Common myeloid progenitor, CD34-positive (primary cell): ENCODE measurements at regions of chr5 and their contacts with region 1.

Region 1: GRCh38 chr5:59367791-59368394 is 525.6 kb downstream of the PDE4D start:
- DNase-seq: peak; percentile 47 to 77 (median 70)
- H3K4me3 ChIP-seq: peak overlapping the region in 1 of 7 experiments; percentile 36
- H3K27ac ChIP-seq: no peak overlapping the region
- H3K4me1 ChIP-seq: no peaks in the 10 kb centered on the region
- H3K27me3 ChIP-seq: no peaks in the 10 kb centered on the region

Region 2: GRCh38 chr5:59188419-59189225 is 179.3 kb before region 1 on chr5:
- CTCF ChIA-PET with region 1: interaction called, 21 read pairs
- POLR2A ChIA-PET with region 1: no interaction called
- DNase-seq: peak; percentile 69 to 86 (median 84)
- H3K4me3 ChIP-seq: peak overlapping the region in 5 of 7 experiments; percentile 30 to 70 (median 52)
- H3K27ac ChIP-seq: no peak overlapping the region
- H3K4me1 ChIP-seq: peaks cover 0 to 5% (median 2%) of the 10 kb centered on the region in 4 experiments
- H3K27me3 ChIP-seq: no peaks in the 10 kb centered on the region

Region 3: DNA sequence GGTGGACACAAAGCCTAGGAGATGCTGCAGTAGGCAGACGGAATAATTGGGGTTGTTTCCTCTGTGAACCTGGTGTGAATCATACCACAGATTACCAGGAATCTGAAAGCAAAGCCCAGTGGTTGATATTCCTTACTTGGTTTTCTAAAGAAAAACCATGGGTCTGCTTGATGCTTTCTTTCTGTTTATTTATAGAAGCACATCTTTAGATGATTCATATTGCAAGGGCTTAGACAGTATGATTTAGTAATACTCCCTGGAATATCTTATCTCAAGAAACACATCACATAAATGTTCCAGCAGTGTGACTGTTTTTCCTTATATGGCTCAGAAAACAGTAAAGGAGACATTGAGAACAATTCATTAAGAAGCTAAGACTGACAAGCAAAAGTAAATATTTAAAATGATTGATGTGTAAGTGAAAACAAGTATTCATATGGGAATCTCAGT is 161.7 kb before region 1 on chr5:
- CTCF ChIA-PET with region 1: no interaction called
- POLR2A ChIA-PET with region 1: no interaction called
- DNase-seq: no peak
- H3K4me3 ChIP-seq: no peak overlapping the region
- H3K27ac ChIP-seq: no peak overlapping the region
- H3K4me1 ChIP-seq: no peaks in the 10 kb centered on the region
- H3K27me3 ChIP-seq: no peaks in the 10 kb centered on the region

Region 4: GRCh38 chr5:59222687-59223521 is 145.0 kb before region 1 on chr5:
- CTCF ChIA-PET with region 1: interaction called, 19 read pairs
- POLR2A ChIA-PET with region 1: no interaction called
- DNase-seq: peak in 2 of 3 donors; percentile 3 to 8
- H3K4me3 ChIP-seq: no peak overlapping the region
- H3K27ac ChIP-seq: no peak overlapping the region
- H3K4me1 ChIP-seq: no peaks in the 10 kb centered on the region
- H3K27me3 ChIP-seq: no peaks in the 10 kb centered on the region

Region 5: GRCh38 chr5:59351076-59351794 is 16.7 kb before region 1 on chr5:
- CTCF ChIA-PET with region 1: interaction called, 44 read pairs
- POLR2A ChIA-PET with region 1: no interaction called
- DNase-seq: no peak
- H3K4me3 ChIP-seq: no peak overlapping the region
- H3K27ac ChIP-seq: no peak overlapping the region
- H3K4me1 ChIP-seq: no peaks in the 10 kb centered on the region
- H3K27me3 ChIP-seq: no peaks in the 10 kb centered on the region

Region 6: GRCh38 chr5:59356813-59357380 is 11.0 kb before region 1 on chr5:
- CTCF ChIA-PET with region 1: interaction called, 44 read pairs
- POLR2A ChIA-PET with region 1: no interaction called
- DNase-seq: no peak
- H3K4me3 ChIP-seq: no peak overlapping the region
- H3K27ac ChIP-seq: no peak overlapping the region
- H3K4me1 ChIP-seq: no peaks in the 10 kb centered on the region
- H3K27me3 ChIP-seq: no peaks in the 10 kb centered on the region

Region 7: GRCh38 chr5:59380350-59380951 is 12.6 kb after region 1 on chr5:
- CTCF ChIA-PET with region 1: interaction called, 16 read pairs
- POLR2A ChIA-PET with region 1: no interaction called
- DNase-seq: peak; percentile 75 to 94 (median 90)
- H3K4me3 ChIP-seq: no peak overlapping the region
- H3K27ac ChIP-seq: no peak overlapping the region
- H3K4me1 ChIP-seq: peaks cover 0 to 14% (median 1%) of the 10 kb centered on the region in 4 experiments
- H3K27me3 ChIP-seq: no peaks in the 10 kb centered on the region

Region 8: GRCh38 chr5:59436364-59437148 is 68.7 kb after region 1 on chr5:
- CTCF ChIA-PET with region 1: no interaction called
- POLR2A ChIA-PET with region 1: no interaction called
- DNase-seq: peak in 2 of 3 donors; percentile 1 to 12
- H3K4me3 ChIP-seq: no peak overlapping the region
- H3K27ac ChIP-seq: no peak overlapping the region
- H3K4me1 ChIP-seq: no peaks in the 10 kb centered on the region
- H3K27me3 ChIP-seq: no peaks in the 10 kb centered on the region